Caco-2 (cell line): ENCODE measurements at regions of chr11 and their contacts with region 1.

Region 1: GRCh38 chr11:96714689-96715088 is 324.9 kb downstream of the JRKL start:
- DNase-seq: no peak
- H3K4me3 ChIP-seq: no peak overlapping the region
- H3K4me3 Mint-ChIP-seq: no peak overlapping the region
- H3K27ac Mint-ChIP-seq: no peak overlapping the region
- H3K4me1 ChIP-seq: no peaks in the 10 kb centered on the region
- H3K4me1 Mint-ChIP-seq: no peaks in the 10 kb centered on the region
- H3K27me3 ChIP-seq: no peaks in the 10 kb centered on the region
- H3K27me3 Mint-ChIP-seq: peaks cover 11% of the 10 kb centered on the region
- CTCF ChIP-seq: no peak

Region 2: GRCh38 chr11:95248666-95249467 is 1465.8 kb before region 1 on chr11:
- CTCF ChIA-PET with region 1: no interaction called
- POLR2A ChIA-PET with region 1: no interaction called
- intact Hi-C with region 1: loop called (anchors 5 kb)
- DNase-seq: no peak
- H3K4me3 ChIP-seq: no peak overlapping the region
- H3K4me3 Mint-ChIP-seq: no peak overlapping the region
- H3K27ac Mint-ChIP-seq: no peak overlapping the region
- H3K4me1 ChIP-seq: peaks cover 40% of the 10 kb centered on the region
- H3K4me1 Mint-ChIP-seq: peaks cover 32% of the 10 kb centered on the region
- H3K27me3 ChIP-seq: no peaks in the 10 kb centered on the region
- H3K27me3 Mint-ChIP-seq: no peaks in the 10 kb centered on the region
- CTCF ChIP-seq: no peak

Region 3: GRCh38 chr11:96155627-96156378 is 558.9 kb before region 1 on chr11:
- CTCF ChIA-PET with region 1: no interaction called
- POLR2A ChIA-PET with region 1: no interaction called
- intact Hi-C with region 1: no loop called
- DNase-seq: peak; percentile 79 to 82
- H3K4me3 ChIP-seq: no peak overlapping the region
- H3K4me3 Mint-ChIP-seq: no peak overlapping the region
- H3K27ac Mint-ChIP-seq: peak overlapping the region; percentile 77
- H3K4me1 ChIP-seq: peaks cover 35% of the 10 kb centered on the region
- H3K4me1 Mint-ChIP-seq: peaks cover 17% of the 10 kb centered on the region
- H3K27me3 ChIP-seq: no peaks in the 10 kb centered on the region
- H3K27me3 Mint-ChIP-seq: no peaks in the 10 kb centered on the region
- CTCF ChIP-seq: peak in 1 of 2 experiments; percentile 40

Region 4: GRCh38 chr11:96794152-96794551 is 79.5 kb after region 1 on chr11:
- CTCF ChIA-PET with region 1: no interaction called
- POLR2A ChIA-PET with region 1: no interaction called
- intact Hi-C with region 1: no loop called
- DNase-seq: peak in 1 of 2 experiments; percentile 31
- H3K4me3 ChIP-seq: no peak overlapping the region
- H3K4me3 Mint-ChIP-seq: no peak overlapping the region
- H3K27ac Mint-ChIP-seq: no peak overlapping the region
- H3K4me1 ChIP-seq: no peaks in the 10 kb centered on the region
- H3K4me1 Mint-ChIP-seq: no peaks in the 10 kb centered on the region
- H3K27me3 ChIP-seq: no peaks in the 10 kb centered on the region; the same call in none of the 2 replicates
- H3K27me3 Mint-ChIP-seq: peaks cover 18% of the 10 kb centered on the region
- CTCF ChIP-seq: peak; percentile 38 to 55